ENCODE measurements at regions of chr1 and their contacts with region 1.

Region 1: GRCh38 chr1:205255941-205256780 is 28.4 kb downstream of the TMCC2 start:
- DNase-seq: peak; percentile 71
- H3K4me3 ChIP-seq: no peak overlapping the region
- H3K27ac ChIP-seq: no peak overlapping the region
- H3K4me1 ChIP-seq: peaks cover 30% of the 10 kb centered on the region
- H3K27me3 ChIP-seq: no peaks in the 10 kb centered on the region
- CTCF ChIP-seq: peak; percentile 95 to 98

Region 2: DNA sequence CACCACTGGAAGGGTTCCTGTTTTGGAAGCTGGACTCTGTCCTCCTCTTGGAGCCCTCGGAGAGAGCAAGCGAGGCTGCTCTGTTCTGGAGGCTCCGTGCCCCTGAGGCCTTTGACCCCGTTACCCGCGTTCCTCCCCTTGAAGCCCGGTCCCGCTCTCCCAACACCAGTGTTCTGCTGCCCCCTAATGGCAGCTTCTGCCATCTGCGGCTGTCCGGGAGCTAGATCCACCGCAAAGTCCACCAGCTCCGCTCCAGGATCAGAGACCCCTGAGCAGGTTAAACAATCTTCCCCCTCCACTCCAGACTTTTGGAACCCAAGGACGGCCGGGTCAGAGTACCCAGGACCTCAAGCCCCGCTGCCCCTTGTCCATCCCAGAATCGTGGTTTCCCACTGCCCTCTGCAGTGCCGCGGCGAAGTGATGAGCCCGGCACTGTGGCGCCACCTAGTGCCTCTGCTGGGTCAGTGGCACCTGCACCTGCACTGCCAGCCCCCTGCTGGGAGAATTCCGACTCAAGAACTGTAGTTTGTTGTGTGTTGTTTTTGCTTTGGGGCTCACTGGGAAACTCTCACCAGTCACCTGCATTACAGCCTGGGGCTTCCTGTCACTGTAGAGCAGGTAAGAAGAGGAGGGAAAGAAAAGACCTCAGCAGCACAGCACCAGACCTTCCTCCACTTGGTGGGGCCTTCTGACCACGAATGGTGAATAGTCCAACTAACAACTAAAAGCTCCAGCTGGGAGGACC is 449.0 kb before region 1 on chr1:
- CTCF ChIA-PET with region 1: interaction called, 3 read pairs
- dilution Hi-C with region 1: no loop called
- in situ Hi-C with region 1: no loop called
- intact Hi-C with region 1: loop called (anchors 1 kb)
- DNase-seq: peak; percentile 63
- H3K4me3 ChIP-seq: peak overlapping the region; percentile 37 to 59 (median 39)
- H3K27ac ChIP-seq: no peak overlapping the region
- H3K4me1 ChIP-seq: no peaks in the 10 kb centered on the region
- H3K27me3 ChIP-seq: no peaks in the 10 kb centered on the region
- CTCF ChIP-seq: peak; percentile 82 to 96

Region 3: DNA sequence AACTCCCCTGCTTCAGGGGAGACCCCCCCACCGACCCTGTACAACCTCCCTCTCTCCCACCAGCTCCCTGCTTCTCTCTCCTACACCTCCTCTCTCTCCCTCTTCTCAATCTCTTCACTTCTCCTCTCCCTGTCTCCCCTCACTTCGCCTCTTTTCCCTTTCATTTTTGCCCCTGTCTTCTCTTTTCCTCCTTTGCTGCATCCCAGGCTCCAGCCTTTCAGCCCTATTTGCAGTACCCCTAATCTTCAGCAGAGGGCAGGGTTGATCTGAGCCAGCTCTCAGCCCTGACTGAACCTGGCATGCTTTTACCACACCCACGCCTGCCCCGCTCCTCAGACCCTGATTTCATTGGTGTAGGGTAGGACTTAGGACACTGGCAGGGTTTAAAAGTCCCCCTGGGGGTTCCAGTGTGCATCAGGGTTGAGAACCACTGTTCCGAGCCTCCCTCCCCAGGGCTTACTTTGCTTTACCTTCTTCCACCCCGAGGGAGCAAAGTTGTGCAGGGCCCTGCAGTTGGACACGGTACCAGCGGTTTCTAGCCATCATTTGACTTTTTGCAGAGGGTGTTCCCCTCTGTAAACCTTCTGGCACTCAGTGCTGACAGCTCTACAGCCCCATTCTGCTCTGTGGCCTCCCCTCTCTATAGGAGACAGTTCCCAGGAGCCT is 280.5 kb before region 1 on chr1:
- CTCF ChIA-PET with region 1: interaction called, 6 read pairs
- dilution Hi-C with region 1: no loop called
- in situ Hi-C with region 1: loop called (anchors 5 to 10 kb)
- intact Hi-C with region 1: loop called (anchors 1 kb)
- DNase-seq: peak; percentile 7
- H3K4me3 ChIP-seq: no peak overlapping the region
- H3K27ac ChIP-seq: no peak overlapping the region
- H3K4me1 ChIP-seq: peaks cover 6% of the 10 kb centered on the region
- H3K27me3 ChIP-seq: no peaks in the 10 kb centered on the region
- CTCF ChIP-seq: peak; percentile 73 to 85

Region 4: DNA sequence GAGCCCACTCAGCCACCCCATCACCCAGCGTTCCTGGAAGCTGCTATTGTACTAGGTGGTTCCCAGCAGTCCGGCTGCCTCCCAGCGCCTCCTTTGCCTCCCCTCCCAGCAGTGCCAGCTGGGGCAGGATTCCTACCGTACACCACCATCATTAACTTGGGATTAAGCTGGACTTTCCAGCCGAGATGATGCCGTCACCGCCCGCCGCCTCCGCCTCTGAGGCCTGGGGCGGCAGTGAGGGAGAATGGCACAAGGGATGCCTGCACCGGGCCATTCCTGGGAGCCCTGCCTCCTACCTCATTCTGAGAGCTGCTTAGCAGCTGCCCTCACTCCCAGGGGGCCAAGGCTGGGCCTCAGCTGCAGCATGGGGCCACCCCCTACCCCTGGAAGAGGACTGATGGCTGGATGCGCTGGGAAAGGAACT is 200.0 kb before region 1 on chr1:
- CTCF ChIA-PET with region 1: no interaction called
- dilution Hi-C with region 1: no loop called
- in situ Hi-C with region 1: loop called in 1 of 2 experiments (anchors 10 kb)
- intact Hi-C with region 1: loop called (anchors 1 kb)
- DNase-seq: peak; percentile 11
- H3K4me3 ChIP-seq: no peak overlapping the region
- H3K27ac ChIP-seq: no peak overlapping the region
- H3K4me1 ChIP-seq: no peaks in the 10 kb centered on the region
- H3K27me3 ChIP-seq: no peaks in the 10 kb centered on the region
- CTCF ChIP-seq: no peak

Region 5: GRCh38 chr1:205121660-205122488 is 134.3 kb before region 1 on chr1 and contains the start of gene RBBP5:
- CTCF ChIA-PET with region 1: no interaction called
- dilution Hi-C with region 1: no loop called
- in situ Hi-C with region 1: no loop called
- intact Hi-C with region 1: loop called (anchors 1 kb)
- DNase-seq: peak; percentile 93
- H3K4me3 ChIP-seq: peak within 1 kb of the TSS; percentile 68 to 96 (median 85)
- H3K27ac ChIP-seq: peak within 1 kb of the TSS; percentile 99
- H3K4me1 ChIP-seq: peaks cover 12% of the 10 kb centered on the region
- H3K27me3 ChIP-seq: no peaks in the 10 kb centered on the region
- CTCF ChIP-seq: peak; percentile 67 to 85
- total RNA-seq, gene RBBP5: 15.2 to 17.5 TPM

Region 6: GRCh38 chr1:205172729-205173366 is 83.3 kb before region 1 on chr1:
- CTCF ChIA-PET with region 1: no interaction called
- dilution Hi-C with region 1: no loop called
- in situ Hi-C with region 1: no loop called
- intact Hi-C with region 1: loop called (anchors 1 kb)
- DNase-seq: peak; percentile 91
- H3K4me3 ChIP-seq: no peak overlapping the region
- H3K27ac ChIP-seq: peak overlapping the region; percentile 53
- H3K4me1 ChIP-seq: peaks cover 27% of the 10 kb centered on the region
- H3K27me3 ChIP-seq: no peaks in the 10 kb centered on the region
- CTCF ChIP-seq: no peak

Region 7: DNA sequence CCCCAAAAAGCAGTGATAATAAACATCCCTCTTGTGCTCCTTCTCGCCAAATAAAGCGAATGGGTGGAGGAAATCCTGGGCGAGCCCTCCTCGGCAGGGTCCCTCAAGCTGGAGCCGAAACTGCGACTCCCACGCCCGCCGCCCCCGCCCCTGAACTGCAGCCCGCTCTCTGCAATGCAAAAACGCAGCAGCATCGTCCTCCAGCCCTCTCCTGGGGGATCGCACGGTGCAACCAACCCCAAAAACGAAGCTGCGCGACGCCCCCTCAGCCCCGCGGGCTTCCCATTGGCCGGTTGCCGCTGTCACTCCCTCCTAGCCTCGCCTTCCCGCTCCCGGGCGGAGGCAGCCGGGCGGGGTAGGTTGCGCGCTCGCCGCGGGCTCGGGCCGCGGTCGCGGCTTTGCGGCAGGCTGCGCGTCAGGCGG is 28.6 kb before region 1 on chr1 and contains the start of gene TMCC2:
- CTCF ChIA-PET with region 1: interaction called, 4 read pairs
- dilution Hi-C with region 1: loop called (anchors 5 kb)
- in situ Hi-C with region 1: no loop called
- intact Hi-C with region 1: loop called (anchors 1 kb)
- DNase-seq: peak; percentile 81
- H3K4me3 ChIP-seq: peak within 1 kb of the TSS; percentile 58 to 73 (median 71)
- H3K27ac ChIP-seq: peak within 1 kb of the TSS; percentile 78
- H3K4me1 ChIP-seq: peaks cover 39% of the 10 kb centered on the region
- H3K27me3 ChIP-seq: no peaks in the 10 kb centered on the region
- CTCF ChIP-seq: no peak
- total RNA-seq, gene TMCC2: 1.5 to 11.5 TPM

Region 8: DNA sequence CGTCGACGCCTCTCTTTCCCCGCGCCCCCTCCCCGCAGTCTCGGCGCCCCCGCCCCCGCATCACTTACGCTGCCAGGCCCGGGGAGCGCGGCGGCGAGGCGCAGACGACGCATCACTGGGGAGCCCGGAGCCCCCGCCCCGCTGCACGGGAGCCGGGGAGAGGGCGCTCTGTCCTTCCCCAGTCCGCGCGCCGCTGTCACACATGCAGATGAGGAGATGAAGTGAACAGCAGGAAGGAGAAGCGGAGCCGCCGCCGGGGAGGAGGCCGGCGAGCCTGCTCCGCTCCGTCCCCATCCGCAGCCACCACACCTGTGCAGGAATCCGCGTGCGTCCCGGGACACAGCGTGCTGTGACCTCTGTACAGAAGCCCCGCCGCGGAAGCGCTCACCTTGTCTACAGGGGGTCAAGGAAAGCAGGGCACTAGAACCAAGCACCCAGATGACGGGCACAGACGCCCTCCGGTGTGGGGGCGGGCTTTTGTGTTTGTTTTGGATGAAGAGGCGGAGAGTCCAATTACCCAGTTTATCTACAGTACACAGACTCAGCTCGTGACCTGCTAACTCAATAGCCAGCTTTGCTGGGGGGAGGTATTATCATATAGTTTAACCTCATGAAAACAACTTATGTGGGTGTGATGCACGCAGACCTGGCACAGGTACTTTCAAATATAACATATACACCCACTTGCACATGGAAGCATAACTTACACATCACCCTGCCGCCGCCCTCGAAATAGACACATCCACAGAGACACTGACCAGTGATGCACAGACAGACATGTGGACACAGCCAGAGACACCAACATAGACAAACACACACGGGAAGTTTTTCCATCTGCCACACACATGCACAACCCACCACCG is 88.1 kb after region 1 on chr1:
- CTCF ChIA-PET with region 1: no interaction called
- dilution Hi-C with region 1: no loop called
- in situ Hi-C with region 1: no loop called
- intact Hi-C with region 1: no loop called
- DNase-seq: no peak
- H3K4me3 ChIP-seq: peak overlapping the region; percentile 8 to 32 (median 28)
- H3K27ac ChIP-seq: no peak overlapping the region
- H3K4me1 ChIP-seq: peaks cover 14% of the 10 kb centered on the region
- H3K27me3 ChIP-seq: peaks cover 11% of the 10 kb centered on the region
- CTCF ChIP-seq: no peak

Measured in mammary epithelial cell (primary cell).